AG04450 (cell line): ENCODE measurements at regions of chr15 and their contacts with region 1.

Region 1: DNA sequence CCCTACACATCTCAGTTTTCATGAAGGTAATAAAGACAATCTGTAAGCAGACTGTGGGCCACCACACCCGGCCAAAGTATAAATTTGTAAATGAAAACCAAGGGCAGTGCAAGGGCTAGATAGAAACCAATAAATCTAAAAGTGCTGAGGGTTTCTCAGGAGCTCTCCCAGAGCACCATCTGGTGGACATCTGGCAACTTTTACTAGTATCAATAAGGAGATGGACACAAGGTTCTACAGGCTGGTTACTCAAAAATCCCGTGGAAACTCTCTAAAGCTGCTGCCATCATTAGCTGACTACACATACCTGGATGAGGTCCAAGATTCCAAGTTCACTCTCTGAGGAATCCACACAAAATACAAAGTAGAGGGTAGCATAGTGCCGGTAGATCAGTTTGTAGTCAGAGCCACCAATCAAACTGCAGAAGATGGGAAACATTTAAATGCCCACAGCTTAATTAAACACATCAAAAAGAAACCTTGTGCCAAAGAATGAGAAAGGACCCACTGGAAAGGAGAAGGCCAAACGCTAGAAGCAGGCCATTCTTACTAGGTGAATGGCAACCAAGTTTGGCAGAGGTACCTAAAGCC is 5.5 kb downstream of the AP3S2 start:
- DNase-seq: peak; percentile 74
- H3K4me3 ChIP-seq: no peak overlapping the region
- H3K27ac ChIP-seq: no peak overlapping the region
- H3K27me3 ChIP-seq: no peaks in the 10 kb centered on the region
- CTCF ChIP-seq: peak; percentile 66

Region 2: GRCh38 chr15:89740137-89740536 is 148.2 kb before region 1 on chr15:
- CTCF ChIA-PET with region 1: interaction called, 78 read pairs
- POLR2A ChIA-PET with region 1: interaction called, 3 read pairs
- DNase-seq: peak; percentile 53
- H3K4me3 ChIP-seq: no peak overlapping the region
- H3K27ac ChIP-seq: no peak overlapping the region
- H3K27me3 ChIP-seq: peaks cover 22% of the 10 kb centered on the region
- CTCF ChIP-seq: peak; percentile 90

Region 3: GRCh38 chr15:89750560-89751542 is 137.5 kb before region 1 on chr15 and contains the start of gene MESP1:
- CTCF ChIA-PET with region 1: interaction called, 19 read pairs
- POLR2A ChIA-PET with region 1: no interaction called
- DNase-seq: peak; percentile 67
- H3K4me3 ChIP-seq: peak within 1 kb of the TSS; percentile 59
- H3K27ac ChIP-seq: no peak within 1 kb of the TSS
- H3K27me3 ChIP-seq: peaks cover 33% of the 10 kb centered on the region
- CTCF ChIP-seq: peak; percentile 70
- polyA plus RNA-seq, gene MESP1: 0.17 and 0.30 TPM in 2 replicates

Region 4: DNA sequence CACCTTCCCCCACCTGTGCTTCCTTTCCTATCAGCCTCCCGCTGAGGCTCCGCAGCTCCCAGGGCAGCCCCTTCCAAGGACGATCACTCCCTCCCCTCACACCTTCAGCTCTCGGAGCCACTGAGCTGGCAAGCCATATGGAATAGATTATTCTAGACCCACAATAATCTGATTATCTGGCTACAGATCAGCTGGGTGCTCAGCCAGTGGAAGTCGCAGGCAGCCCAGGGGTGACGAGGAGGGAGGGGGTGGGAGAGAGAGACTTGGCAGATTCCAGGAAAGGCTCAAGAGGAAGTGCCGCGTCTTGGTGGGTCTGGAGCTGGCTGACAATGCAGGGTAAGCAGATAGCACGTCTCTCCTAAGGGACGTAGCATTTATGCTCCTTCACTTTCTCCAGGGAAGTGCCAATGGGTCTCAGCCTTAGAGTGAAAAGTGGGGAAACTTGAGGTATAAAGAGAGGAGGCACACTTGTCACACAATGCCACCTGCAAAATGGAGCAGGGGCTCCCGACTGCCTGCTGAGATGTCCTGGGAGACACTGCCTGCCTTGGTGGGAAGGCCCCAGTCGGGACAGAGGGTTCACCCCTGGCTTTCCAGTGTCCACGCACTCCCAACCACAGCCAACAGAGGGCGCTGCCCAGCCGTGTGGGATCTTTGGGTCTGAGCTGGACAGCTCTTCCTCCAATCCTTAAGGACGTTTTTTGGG is 127.9 kb before region 1 on chr15:
- CTCF ChIA-PET with region 1: interaction called, 149 read pairs
- POLR2A ChIA-PET with region 1: interaction called, 5 read pairs
- DNase-seq: no peak
- H3K4me3 ChIP-seq: no peak overlapping the region
- H3K27ac ChIP-seq: no peak overlapping the region
- H3K27me3 ChIP-seq: no peaks in the 10 kb centered on the region
- CTCF ChIP-seq: peak; percentile 98

Region 5: GRCh38 chr15:89898614-89899294 is 10.4 kb after region 1 on chr15:
- CTCF ChIA-PET with region 1: interaction called, 10 read pairs
- POLR2A ChIA-PET with region 1: no interaction called
- DNase-seq: no peak
- H3K4me3 ChIP-seq: no peak overlapping the region
- H3K27ac ChIP-seq: no peak overlapping the region
- H3K27me3 ChIP-seq: no peaks in the 10 kb centered on the region
- CTCF ChIP-seq: peak; percentile 62

Region 6: DNA sequence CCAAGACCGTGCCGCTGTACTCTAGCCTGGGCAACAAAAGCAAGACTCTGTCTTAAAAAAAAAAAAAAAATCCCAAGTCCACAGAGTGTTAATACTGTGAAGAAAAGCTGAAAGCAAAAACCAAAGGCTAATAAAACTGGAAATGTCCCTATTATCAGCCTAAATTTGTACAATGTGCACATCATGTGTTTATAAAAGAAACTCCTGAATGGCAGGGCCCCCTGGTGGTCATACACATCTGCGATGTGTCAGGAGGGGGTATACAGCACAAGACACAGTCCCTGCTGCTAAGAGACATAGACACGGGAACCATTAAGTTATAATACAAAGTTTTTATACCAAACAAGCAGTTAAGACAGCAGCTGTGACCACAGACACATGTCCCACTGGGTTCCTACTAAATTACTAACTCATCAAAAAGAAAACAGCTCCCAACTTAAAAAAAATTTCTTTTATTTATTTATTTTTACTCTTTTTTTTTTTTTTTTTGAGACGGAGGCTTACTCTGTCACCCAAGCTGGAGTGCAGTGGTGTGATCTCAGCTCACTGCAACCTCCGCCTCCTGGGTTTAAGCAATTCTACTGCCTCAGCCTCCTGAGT is 183.0 kb after region 1 on chr15:
- CTCF ChIA-PET with region 1: interaction called, 20 read pairs
- POLR2A ChIA-PET with region 1: no interaction called
- DNase-seq: peak; percentile 62
- H3K4me3 ChIP-seq: no peak overlapping the region
- H3K27ac ChIP-seq: no peak overlapping the region
- H3K27me3 ChIP-seq: no peaks in the 10 kb centered on the region
- CTCF ChIP-seq: peak; percentile 84

Region 7: DNA sequence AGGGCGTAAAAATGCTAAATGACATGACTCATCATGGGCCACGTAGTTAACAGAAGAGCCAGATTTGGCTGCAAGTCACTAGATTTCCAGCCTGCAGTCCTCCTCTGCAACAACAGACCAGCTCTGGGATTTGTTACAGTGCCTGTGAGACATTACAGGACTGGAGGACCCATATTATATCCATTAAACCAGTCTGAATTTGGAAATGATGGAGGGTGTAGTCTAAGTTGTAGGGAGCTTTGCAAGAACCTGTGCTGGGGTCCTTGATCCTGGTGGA is 474.6 kb after region 1 on chr15:
- CTCF ChIA-PET with region 1: no interaction called
- POLR2A ChIA-PET with region 1: no interaction called
- DNase-seq: peak; percentile 53
- H3K4me3 ChIP-seq: no peak overlapping the region
- H3K27ac ChIP-seq: peak overlapping the region; percentile 53
- H3K27me3 ChIP-seq: no peaks in the 10 kb centered on the region
- CTCF ChIP-seq: no peak